Activated T-helper 2 cell treated with anti-CD3 and anti-CD28 coated beads, Interferon-gamma antibody, Interleukin-2, Interleukin-4, amounts not matched to agents 10 μg/mL and 5 μg/mL and 100 μg/mL, durations not matched to agents 14 hours and 24 hours and 36 hours (primary cell): ENCODE measurements at regions of chr1 and their contacts with region 1.

Region 1: DNA sequence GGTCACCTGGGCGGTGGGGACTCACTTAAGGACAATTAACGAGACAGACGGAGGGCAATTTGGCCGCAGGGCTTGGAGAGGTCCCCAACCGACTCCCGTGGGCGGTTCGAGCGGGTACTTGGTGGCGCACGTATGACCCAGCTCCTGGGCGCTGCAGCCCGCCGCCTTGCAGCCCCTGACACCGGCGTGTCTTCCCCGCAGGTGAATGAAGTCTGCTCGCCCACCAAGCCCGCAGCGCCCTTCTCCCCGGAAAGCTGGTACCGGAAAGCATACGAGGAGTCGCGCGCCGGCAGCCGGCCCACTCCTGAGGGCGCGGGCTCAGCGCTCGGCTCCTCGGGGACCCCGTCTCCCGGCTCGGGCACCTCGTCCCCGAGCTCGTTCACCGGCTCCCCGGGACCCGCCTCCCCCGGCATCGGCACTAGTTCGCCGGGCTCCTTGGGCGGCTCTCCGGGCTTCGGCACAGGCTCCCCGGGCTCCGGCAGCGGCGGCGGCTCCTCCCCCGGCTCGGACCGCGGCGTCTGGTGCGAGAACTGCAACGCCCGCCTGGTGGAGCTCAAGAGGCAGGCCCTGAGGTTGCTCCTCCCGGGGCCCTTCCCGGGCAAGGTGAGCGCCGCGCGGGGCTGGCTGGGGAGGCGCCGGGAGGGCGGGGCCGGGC is 1.4 kb downstream of the KIF26B start:
- DNase-seq: peak; percentile 77
- H3K4me3 Mint-ChIP-seq: peak overlapping the region; percentile 71
- H3K27ac Mint-ChIP-seq: no peak overlapping the region
- H3K4me1 Mint-ChIP-seq: peaks cover 17% of the 10 kb centered on the region
- H3K27me3 Mint-ChIP-seq: peaks cover 61% of the 10 kb centered on the region

Region 2: DNA sequence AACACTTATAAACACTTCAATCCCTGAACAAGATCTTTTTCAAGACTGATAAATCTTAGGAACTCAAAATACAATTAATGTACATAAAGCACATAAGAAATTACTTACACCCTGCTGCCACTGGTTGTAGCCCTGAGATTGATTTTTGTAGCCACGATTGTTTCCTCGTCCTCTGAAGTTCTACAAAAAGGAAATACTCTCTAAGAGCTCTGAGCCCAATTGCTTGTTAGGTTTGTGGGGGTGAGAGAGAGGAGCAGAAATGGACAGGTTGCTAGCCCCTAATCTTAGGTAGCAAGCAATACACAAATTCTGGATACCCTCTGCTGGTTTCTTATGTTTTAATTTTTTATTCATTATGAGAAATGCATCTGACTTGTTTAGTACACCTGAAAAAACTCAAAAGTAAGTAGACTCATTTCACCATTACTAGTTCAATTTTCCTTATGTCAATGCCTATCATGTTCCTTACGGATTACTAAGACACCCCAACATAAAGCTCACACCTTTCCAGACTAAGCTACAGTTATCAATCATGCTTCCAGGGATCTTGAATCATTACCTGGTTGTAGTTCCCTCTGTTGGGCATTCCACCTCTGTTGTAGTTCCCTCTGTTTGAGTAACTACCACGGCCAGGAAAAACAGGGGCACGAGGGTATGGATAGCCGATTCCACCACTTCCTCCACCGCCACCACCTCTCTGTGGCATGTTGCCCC is 301.2 kb before region 1 on chr1:
- intact Hi-C with region 1: loop called (anchors 10 kb)
- DNase-seq: no peak
- H3K4me3 Mint-ChIP-seq: peak overlapping the region; percentile 63
- H3K27ac Mint-ChIP-seq: peak overlapping the region; percentile 66
- H3K4me1 Mint-ChIP-seq: peaks cover 69% of the 10 kb centered on the region
- H3K27me3 Mint-ChIP-seq: no peaks in the 10 kb centered on the region

Region 3: DNA sequence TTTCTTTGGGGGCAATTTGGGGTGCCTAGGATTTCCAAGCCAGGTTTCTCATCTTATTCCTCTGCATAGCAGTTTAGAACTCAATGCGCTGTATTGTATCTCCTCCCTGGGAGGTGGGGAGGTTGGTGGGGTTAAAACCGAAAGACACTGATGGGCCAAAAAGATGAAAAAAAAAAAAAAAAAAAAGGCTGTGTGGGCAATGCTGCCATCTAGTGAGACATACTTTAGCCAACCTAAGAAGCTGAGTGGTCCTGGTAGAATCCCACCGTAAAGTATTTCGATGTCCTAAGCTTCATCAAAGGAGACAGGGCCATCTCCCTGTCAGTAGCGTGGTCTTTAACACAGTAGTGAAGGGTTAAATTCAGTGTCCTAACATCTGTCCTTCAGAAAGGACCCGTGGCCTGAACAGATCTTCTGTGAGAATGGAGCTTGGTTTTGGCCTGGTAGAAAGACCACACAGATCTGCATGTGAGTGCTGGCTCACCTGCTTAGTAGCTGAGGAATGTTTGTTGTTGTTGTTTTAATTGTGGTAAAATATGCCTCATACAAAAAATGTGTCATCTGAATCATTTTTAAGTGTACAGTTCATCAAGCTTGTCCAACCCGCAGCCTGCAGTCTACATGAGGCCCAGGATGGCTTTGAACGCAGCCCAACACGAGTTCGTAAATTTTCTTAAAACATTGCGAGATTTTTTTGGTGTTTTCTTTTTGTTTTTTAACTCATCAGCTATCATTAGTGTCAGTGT is 224.8 kb after region 1 on chr1:
- intact Hi-C with region 1: loop called (anchors 2 kb)
- DNase-seq: no peak
- H3K4me3 Mint-ChIP-seq: no peak overlapping the region
- H3K27ac Mint-ChIP-seq: no peak overlapping the region
- H3K4me1 Mint-ChIP-seq: peaks cover 22% of the 10 kb centered on the region
- H3K27me3 Mint-ChIP-seq: peaks cover 10% of the 10 kb centered on the region

Region 4: DNA sequence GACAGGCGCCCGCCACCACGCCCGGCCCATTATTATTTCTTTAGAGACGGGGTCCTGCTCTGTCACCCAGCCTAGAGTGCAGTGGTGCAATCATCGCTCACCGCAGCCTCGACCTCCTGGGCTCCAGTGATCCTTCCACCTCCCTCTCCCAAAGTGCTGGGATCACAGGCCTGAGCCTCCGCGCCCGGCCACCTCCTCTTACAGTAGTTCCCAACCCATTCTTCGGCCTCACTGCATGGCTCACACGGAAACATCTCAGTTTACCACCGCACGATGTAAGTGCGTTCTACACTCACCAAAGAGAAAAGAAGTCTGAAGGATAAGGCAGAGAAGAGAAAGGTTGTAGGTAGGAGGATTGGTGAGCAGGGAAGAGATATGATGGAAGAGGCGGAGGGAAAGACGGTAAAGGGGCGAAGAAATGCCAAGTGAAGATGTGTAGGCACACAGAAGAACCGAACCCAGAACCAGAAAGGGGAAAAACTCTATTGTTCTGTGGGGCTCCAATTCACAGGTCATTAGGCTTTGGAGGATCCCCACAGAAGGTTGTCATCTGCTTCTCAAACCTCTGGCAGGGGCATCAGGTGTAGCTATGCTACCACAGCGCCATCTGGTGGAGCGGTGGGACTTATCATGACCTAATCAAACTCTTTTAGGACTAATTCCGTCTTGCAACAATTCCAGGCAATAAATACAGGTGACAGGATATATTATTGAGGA is 846.7 kb after region 1 on chr1:
- intact Hi-C with region 1: loop called (anchors 1 kb)
- DNase-seq: peak; percentile 54
- H3K4me3 Mint-ChIP-seq: no peak overlapping the region
- H3K27ac Mint-ChIP-seq: no peak overlapping the region
- H3K4me1 Mint-ChIP-seq: no peaks in the 10 kb centered on the region
- H3K27me3 Mint-ChIP-seq: no peaks in the 10 kb centered on the region

Region 5: GRCh38 chr1:246497331-246497915 is 1341.2 kb after region 1 on chr1:
- intact Hi-C with region 1: loop called (anchors 2 kb)
- DNase-seq: no peak
- H3K4me3 Mint-ChIP-seq: no peak overlapping the region
- H3K27ac Mint-ChIP-seq: no peak overlapping the region
- H3K4me1 Mint-ChIP-seq: peaks cover 11% of the 10 kb centered on the region
- H3K27me3 Mint-ChIP-seq: no peaks in the 10 kb centered on the region

Region 6: DNA sequence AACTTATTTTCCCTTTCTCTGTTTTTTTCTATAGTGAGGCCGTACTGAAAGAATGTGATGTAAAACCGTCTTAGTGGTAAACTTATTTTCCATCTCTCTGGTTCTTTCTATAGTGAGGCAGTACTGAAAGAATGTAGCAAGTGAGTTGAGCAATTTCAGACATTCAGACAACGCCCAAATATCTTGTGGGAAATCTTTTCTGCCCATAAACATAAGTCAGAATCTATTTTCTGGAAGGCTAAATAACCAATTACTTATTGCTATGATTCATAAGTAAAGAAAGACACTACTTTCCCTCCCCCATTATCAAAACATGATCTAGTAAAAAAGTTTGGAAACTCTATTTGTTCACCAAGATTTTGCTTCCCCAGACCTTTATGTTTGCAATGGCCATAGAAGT is 1549.2 kb after region 1 on chr1:
- intact Hi-C with region 1: loop called (anchors 10 kb)
- DNase-seq: no peak
- H3K4me3 Mint-ChIP-seq: no peak overlapping the region
- H3K27ac Mint-ChIP-seq: no peak overlapping the region
- H3K4me1 Mint-ChIP-seq: peaks cover 13% of the 10 kb centered on the region
- H3K27me3 Mint-ChIP-seq: peaks cover 16% of the 10 kb centered on the region